Mucosa of descending colon (tissue), 3 donors: ENCODE measurements at regions of chr11 and their contacts with region 1.

Region 1: GRCh38 chr11:117843666-117844484 is 19.3 kb upstream of the FXYD2 start:
- DNase-seq: peak; percentile 75 to 95 (median 87)
- ATAC-seq: peak; percentile 86
- H3K4me3 ChIP-seq: no peak overlapping the region
- H3K4me1 ChIP-seq: no peaks in the 10 kb centered on the region
- CTCF ChIP-seq: peak; percentile 99

Region 2: DNA sequence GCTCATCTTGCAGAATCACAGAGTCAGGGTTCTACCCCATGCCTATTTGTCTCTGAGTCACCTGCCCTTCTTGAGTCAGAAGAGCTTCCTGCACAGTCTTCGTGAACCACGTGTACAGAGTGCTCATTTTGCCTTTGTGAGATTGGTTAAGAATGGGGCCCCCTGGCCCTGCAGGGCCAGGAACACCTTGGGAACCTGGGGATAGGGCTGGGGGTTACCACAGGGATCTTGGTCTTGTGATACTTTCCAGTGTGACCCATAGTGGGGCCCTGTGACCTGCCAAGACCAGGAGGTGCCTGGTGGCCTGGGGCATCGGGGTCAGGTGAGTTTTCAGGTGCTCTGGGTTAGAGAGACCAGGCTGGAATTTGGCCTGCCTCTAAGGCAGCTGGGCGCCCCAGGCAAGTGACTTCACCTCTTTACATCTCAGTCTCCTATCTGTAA is 75.9 kb after region 1 on chr11:
- intact Hi-C with region 1: loop called in 1 of 2 experiments (anchors 10 kb)
- DNase-seq: no peak
- ATAC-seq: no peak
- H3K4me3 ChIP-seq: no peak overlapping the region
- H3K4me1 ChIP-seq: no peaks in the 10 kb centered on the region
- CTCF ChIP-seq: no peak

Region 3: GRCh38 chr11:117946842-117947526 is 103.1 kb after region 1 on chr11:
- intact Hi-C with region 1: loop called (anchors 2 to 5 kb)
- DNase-seq: peak; percentile 85 to 92 (median 90)
- ATAC-seq: peak; percentile 94
- H3K4me3 ChIP-seq: no peak overlapping the region
- H3K4me1 ChIP-seq: no peaks in the 10 kb centered on the region
- CTCF ChIP-seq: peak; percentile 80

Region 4: GRCh38 chr11:118051611-118052461 is 208.0 kb after region 1 on chr11:
- intact Hi-C with region 1: loop called (anchors 10 kb)
- DNase-seq: peak in 1 of 3 donors; percentile 34
- ATAC-seq: peak; percentile 80
- H3K4me3 ChIP-seq: no peak overlapping the region
- H3K4me1 ChIP-seq: no peaks in the 10 kb centered on the region
- CTCF ChIP-seq: no peak

Region 5: GRCh38 chr11:118911892-118912744 is 1068.2 kb after region 1 on chr11:
- intact Hi-C with region 1: no loop called
- DNase-seq: peak; percentile 68 to 90 (median 82)
- ATAC-seq: peak; percentile 48
- H3K4me3 ChIP-seq: no peak overlapping the region
- H3K4me1 ChIP-seq: peaks cover 85% of the 10 kb centered on the region
- CTCF ChIP-seq: no peak